ENCODE measurements at regions of chr5 and their contacts with region 1.

Region 1: GRCh38 chr5:134430001-134430569 is 18.4 kb upstream of the CDKN2AIPNL start:
- DNase-seq: no peak
- H3K4me3 ChIP-seq: peak overlapping the region in 1 of 4 experiments; percentile 44; a peak in 2 of 8 replicates
- H3K27ac ChIP-seq: no peak overlapping the region
- H3K4me1 ChIP-seq: peaks cover 6 to 27% (median 16%) of the 10 kb centered on the region in 4 experiments; a peak in 6 of 7 replicates
- H3K27me3 ChIP-seq: peaks cover 0 to 1% (median 0%) of the 10 kb centered on the region in 4 experiments; a peak in 1 of 7 replicates
- CTCF ChIP-seq: peak in 1 of 3 experiments; percentile 7; a peak in 1 of 4 replicates
- EP300 ChIP-seq: no peak
- POLR2A ChIP-seq: no peak
- RAD21 ChIP-seq: no peak; a peak in 1 of 4 replicates

Region 2: DNA sequence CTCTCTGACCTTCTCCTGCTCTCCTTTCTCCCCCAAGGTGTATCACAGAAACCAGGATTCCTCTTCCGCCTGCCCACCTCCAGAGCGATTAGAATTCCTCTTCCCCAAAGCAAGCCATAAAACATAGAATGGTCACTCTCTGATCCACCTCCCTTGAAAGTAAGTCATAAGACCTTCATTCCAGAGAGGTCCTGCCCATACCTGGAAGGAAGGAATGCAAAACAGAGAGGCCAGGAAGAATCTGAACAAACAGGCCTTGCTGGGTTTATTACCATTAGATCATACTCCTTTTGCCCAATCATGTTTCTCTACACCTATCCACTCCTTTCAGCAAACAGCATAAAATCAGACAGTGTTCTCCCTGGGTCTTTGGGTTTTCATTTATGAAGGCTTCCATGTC is 84.1 kb before region 1 on chr5:
- CTCF ChIA-PET with region 1: no interaction called
- POLR2A ChIA-PET with region 1: no interaction called
- DNase-seq: no peak
- H3K4me3 ChIP-seq: peak overlapping the region in 1 of 4 experiments; percentile 15; a peak in 1 of 8 replicates
- H3K27ac ChIP-seq: peak overlapping the region; percentile 43
- H3K4me1 ChIP-seq: peaks cover 0 to 6% (median 3%) of the 10 kb centered on the region in 4 experiments; a peak in 3 of 7 replicates
- H3K27me3 ChIP-seq: no peaks in the 10 kb centered on the region
- CTCF ChIP-seq: no peak
- EP300 ChIP-seq: no peak
- POLR2A ChIP-seq: no peak
- RAD21 ChIP-seq: no peak

Region 3: DNA sequence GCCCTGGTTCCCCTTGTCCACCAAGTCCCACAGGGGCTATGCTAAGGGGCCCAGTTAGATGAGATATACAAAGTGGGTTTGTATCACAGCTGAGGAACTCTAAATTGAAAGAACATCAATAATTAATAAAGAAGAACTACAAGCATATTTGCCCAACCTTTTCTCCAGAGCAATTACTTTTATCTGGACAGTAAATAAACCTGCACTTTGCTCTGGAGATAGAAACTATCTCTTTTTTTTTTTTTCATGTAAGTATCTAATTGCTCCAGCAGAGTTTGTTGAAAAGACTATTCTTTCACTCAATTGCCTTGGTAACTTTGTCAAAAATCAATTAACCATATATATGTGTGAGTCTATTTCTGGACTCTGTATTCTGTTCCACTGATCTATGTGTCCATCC is 12.4 kb before region 1 on chr5:
- CTCF ChIA-PET with region 1: interaction called, 91 read pairs
- POLR2A ChIA-PET with region 1: interaction called, 11 read pairs
- DNase-seq: no peak
- H3K4me3 ChIP-seq: no peak overlapping the region
- H3K27ac ChIP-seq: no peak overlapping the region
- H3K4me1 ChIP-seq: peaks cover 0 to 1% (median 0%) of the 10 kb centered on the region in 4 experiments; a peak in 3 of 7 replicates
- H3K27me3 ChIP-seq: no peaks in the 10 kb centered on the region
- CTCF ChIP-seq: no peak
- EP300 ChIP-seq: no peak
- POLR2A ChIP-seq: no peak
- RAD21 ChIP-seq: no peak

Region 4: GRCh38 chr5:134446938-134447337 is 16.9 kb after region 1 on chr5:
- CTCF ChIA-PET with region 1: interaction called, 3 read pairs
- POLR2A ChIA-PET with region 1: interaction called, 21 read pairs
- DNase-seq: no peak
- H3K4me3 ChIP-seq: no peak overlapping the region
- H3K27ac ChIP-seq: no peak overlapping the region
- H3K4me1 ChIP-seq: peaks cover 0 to 7% (median 0%) of the 10 kb centered on the region in 4 experiments; a peak in 1 of 7 replicates
- H3K27me3 ChIP-seq: no peaks in the 10 kb centered on the region
- CTCF ChIP-seq: no peak
- EP300 ChIP-seq: no peak
- POLR2A ChIP-seq: no peak
- RAD21 ChIP-seq: no peak

Region 5: GRCh38 chr5:134541736-134542376 is 111.8 kb after region 1 on chr5:
- CTCF ChIA-PET with region 1: interaction called, 3 read pairs
- POLR2A ChIA-PET with region 1: interaction called, 12 read pairs
- DNase-seq: peak in 1 of 2 experiments; percentile 85
- H3K4me3 ChIP-seq: no peak overlapping the region
- H3K27ac ChIP-seq: no peak overlapping the region
- H3K4me1 ChIP-seq: peaks cover 6 to 17% (median 9%) of the 10 kb centered on the region in 4 experiments
- H3K27me3 ChIP-seq: no peaks in the 10 kb centered on the region
- CTCF ChIP-seq: no peak
- EP300 ChIP-seq: no peak
- POLR2A ChIP-seq: no peak
- RAD21 ChIP-seq: peak in 1 of 2 experiments; percentile 23; a peak in 2 of 4 replicates

Region 6: DNA sequence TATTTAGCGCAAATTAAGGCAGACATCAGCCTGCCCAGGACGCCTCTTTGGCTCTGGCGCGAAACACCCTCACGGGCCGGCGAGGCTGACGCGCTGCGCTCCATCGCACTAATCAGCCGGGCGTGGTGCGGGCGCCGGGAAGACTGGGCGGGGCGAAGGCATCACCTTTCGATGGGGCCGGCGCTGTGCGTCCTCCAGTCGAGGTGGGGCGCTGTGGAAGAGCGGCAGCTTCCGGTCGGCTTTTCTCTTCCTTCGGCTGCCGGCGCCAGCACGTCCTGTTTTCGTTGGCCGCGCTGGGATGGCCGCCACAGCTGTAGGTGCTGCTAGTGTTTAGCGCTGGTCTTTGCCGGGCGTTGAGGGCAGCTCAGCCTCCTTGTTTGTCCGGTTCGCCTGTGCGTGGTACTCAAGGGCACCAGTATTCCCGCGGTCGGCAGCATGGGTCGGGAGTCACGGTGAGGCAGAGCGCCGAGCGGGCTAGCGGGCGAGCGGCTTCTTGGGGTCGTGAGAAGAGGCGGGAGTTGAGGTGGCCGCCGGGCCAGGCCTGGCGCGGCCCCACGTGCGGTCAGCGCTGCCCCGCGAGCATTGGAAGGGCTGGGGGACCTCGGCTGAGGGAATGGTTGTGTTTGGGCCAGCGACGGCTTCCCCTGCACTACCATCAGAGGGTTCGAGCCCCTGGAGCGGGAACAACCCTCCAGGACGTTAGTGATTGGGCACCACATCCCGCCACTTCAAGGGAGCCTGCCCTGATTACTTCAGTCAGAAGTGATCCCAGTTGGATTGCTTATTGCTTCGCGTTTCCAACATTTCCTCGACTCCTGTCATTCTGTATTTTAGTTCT is 328.6 kb after region 1 on chr5 and contains the start of gene DDX46:
- CTCF ChIA-PET with region 1: no interaction called
- POLR2A ChIA-PET with region 1: no interaction called
- DNase-seq: peak; percentile 80 to 97
- H3K4me3 ChIP-seq: peak within 1 kb of the TSS; percentile 77 to 98 (median 94)
- H3K27ac ChIP-seq: peak within 1 kb of the TSS; percentile 89
- H3K4me1 ChIP-seq: peaks cover 0 to 2% (median 0%) of the 10 kb centered on the region in 4 experiments; a peak in 4 of 7 replicates
- H3K27me3 ChIP-seq: no peaks in the 10 kb centered on the region; a peak in 1 of 7 replicates
- CTCF ChIP-seq: peak; percentile 81 to 90 (median 81)
- EP300 ChIP-seq: no peak
- POLR2A ChIP-seq: peak; percentile 94
- RAD21 ChIP-seq: no peak; a peak in 1 of 4 replicates
- total RNA-seq, gene DDX46: 100.0 and 110 TPM in 2 replicates